Activated T-helper 1 cell treated with anti-CD3 and anti-CD28 coated beads, Interleukin-12 subunit alpha, Interleukin-12 subunit beta, Interleukin-2, Interleukin-4 antibody, amounts not matched to agents 30 ng/mL and 10 ng/mL and 1 ng/mL, durations not matched to agents 14 hours and 24 hours and 36 hours (primary cell): ENCODE measurements at regions of chr11 and their contacts with region 1.

Region 1: DNA sequence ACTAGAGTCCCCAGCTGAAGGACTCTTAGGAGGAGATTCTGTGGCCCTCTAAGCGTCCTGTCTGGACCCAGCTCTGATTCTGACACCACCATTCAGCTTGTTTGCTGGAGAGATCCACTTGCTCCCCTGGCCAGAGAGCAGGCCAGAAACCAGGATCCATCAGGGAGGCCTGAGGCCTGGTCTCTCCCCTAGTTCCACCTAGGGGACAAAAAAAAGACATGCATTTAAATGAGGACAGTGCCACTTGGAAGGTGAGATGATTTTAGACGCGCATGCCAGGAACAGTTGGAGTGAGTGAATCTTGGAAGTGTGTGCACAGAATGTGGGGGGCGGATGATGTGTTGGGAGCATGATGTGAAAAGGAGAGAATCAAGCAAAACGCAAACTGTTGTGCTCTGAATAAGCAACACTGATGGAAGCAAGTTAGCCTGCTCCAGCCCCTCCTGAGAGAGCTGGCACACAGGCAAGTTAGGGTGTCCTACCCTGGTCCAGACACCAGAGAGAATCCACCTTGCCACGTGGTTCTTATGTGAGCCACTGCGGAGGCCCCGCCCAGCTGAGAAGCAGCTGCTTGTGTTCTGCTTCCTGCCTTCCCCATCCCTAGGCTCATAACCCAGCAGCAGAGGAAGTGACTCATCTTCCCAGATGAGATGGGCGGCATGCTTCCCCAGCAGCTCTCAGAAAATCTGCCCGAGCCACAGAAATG is 8.0 kb upstream of the SLCO2B1 start:
- DNase-seq: peak; percentile 76
- H3K4me3 Mint-ChIP-seq: peak overlapping the region; percentile 63
- H3K27ac Mint-ChIP-seq: peak overlapping the region; percentile 88
- H3K4me1 Mint-ChIP-seq: peaks cover 63% of the 10 kb centered on the region
- H3K27me3 Mint-ChIP-seq: peaks cover 11% of the 10 kb centered on the region

Region 2: DNA sequence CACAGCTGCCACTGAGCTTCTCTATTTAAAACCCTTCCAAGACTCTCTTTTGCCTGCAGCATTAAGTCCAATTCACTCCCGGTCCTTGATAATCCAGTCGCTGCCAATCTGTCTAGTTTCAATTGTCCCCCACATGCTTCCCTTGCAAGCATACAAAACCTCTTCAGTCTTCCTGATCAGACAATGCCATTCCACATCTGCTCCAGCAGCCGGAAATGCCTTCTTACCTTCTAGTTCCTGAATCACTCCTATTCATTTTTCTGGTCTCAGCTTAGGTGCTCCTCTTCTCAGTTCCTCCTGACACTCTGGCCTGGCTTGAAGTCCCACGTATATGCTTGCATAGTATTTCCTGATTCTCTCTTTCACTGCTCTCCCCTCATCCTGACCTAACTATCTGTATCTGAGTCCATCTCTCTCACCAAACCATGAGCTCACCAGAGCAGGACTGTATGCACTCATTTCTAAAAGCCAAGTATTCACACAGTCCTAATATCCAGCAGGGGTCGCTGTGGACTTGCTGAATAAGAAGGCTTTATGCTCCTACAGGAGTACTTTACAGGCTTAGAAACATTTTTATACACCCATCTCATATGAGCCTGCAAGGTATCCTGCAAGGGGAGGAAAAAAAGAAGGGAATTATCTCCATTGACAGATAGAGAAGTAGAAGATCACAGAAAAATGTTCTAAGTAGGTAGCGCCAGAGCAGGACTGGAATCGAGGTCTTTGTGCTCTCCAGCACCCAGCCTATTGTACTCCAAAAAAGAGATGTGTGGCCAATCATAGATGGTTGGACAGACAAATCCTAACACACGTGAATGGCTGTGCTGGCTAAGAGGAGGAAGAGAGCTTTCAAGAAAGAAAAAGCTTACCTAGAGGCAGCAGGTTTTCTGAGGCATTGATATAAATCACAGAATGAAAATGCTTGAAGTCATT is 213.2 kb before region 1 on chr11:
- intact Hi-C with region 1: loop called (anchors 1 kb)
- DNase-seq: peak; percentile 49
- H3K4me3 Mint-ChIP-seq: no peak overlapping the region
- H3K27ac Mint-ChIP-seq: no peak overlapping the region
- H3K4me1 Mint-ChIP-seq: peaks cover 42% of the 10 kb centered on the region
- H3K27me3 Mint-ChIP-seq: no peaks in the 10 kb centered on the region

Region 3: DNA sequence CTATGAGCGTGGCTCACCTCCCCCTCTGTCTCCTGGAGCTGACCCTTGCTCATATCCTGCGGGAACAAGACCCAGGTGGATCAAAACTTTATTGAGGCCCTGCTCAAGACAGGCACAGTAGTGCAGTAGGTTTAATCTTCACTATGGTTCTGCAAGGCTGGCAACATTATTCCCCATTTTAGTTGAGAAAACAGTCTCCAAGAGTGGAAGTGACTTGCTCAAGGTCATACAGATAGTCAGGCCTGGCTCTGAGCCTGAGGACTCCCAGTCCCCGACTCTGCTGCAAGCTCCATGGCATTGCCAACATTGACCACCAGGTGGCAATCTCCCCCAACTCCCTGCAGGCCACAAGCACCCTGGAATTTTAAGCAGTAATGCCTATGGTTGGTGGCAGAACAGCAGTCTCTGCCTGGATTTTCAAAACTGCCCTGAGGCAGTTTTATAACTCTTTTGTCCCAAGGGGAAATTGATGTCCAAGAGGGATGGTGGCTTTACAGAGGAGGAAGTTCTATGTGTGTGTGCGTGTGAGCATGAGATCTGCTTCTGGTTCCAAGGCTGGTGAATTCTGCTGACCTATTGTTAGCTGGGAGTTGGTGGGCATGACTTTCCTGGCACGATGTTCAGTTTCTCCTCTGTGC is 120.0 kb before region 1 on chr11:
- intact Hi-C with region 1: loop called (anchors 2 kb)
- DNase-seq: peak; percentile 60
- H3K4me3 Mint-ChIP-seq: no peak overlapping the region
- H3K27ac Mint-ChIP-seq: no peak overlapping the region
- H3K4me1 Mint-ChIP-seq: no peaks in the 10 kb centered on the region
- H3K27me3 Mint-ChIP-seq: no peaks in the 10 kb centered on the region

Region 4: GRCh38 chr11:75204685-75205563 is 62.1 kb after region 1 on chr11:
- intact Hi-C with region 1: loop called (anchors 1 kb)
- DNase-seq: peak; percentile 76
- H3K4me3 Mint-ChIP-seq: no peak overlapping the region
- H3K27ac Mint-ChIP-seq: no peak overlapping the region
- H3K4me1 Mint-ChIP-seq: no peaks in the 10 kb centered on the region
- H3K27me3 Mint-ChIP-seq: peaks cover 6% of the 10 kb centered on the region

Region 5: GRCh38 chr11:75241036-75241905 is 98.4 kb after region 1 on chr11:
- intact Hi-C with region 1: loop called (anchors 1 kb)
- DNase-seq: peak; percentile 89
- H3K4me3 Mint-ChIP-seq: peak overlapping the region; percentile 58
- H3K27ac Mint-ChIP-seq: no peak overlapping the region
- H3K4me1 Mint-ChIP-seq: peaks cover 6% of the 10 kb centered on the region
- H3K27me3 Mint-ChIP-seq: peaks cover 52% of the 10 kb centered on the region

Region 6: DNA sequence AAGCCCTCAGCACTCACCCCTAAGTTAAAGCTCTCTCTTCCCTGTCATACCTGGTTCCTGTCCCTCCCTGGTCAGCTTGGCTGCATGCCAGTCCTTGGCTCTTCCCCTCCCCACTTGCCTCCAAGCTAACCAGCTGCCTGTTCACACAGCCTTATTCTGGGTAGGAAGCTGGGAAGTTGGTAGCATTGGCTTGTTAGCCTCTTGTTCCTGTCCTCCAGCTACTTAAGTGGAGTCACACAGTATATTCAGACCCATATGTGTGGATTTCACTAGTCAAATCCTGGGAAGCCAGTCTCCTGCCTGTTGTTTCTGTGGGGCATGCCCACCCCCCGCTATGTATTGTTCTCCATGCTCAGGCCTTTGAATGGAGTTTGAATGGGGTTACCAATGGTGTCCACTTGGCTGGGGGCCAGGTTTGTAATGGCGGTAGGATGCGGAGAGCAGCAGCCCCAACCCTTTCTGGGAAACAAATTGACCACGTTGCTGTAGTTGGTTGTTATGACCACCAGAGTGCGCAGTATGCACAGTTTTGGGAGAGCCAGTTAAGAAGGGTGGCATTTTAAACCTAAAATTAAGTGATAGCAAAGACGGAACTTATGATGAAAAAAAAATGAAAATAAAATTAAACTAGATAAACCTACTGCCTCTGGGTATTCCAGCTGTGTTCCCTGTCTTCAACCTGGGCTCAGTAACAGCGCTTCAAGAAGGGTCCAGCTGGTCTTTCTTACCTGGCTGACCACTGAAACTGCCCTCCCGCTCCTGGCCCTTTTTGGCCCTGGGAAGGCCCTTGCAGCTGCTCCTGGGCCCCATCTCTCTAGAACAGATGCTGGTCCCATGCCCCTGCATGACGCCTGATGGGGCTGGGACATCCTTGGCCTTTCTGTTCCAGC is 245.8 kb after region 1 on chr11:
- intact Hi-C with region 1: loop called (anchors 5 kb)
- DNase-seq: peak; percentile 64
- H3K4me3 Mint-ChIP-seq: no peak overlapping the region
- H3K27ac Mint-ChIP-seq: no peak overlapping the region
- H3K4me1 Mint-ChIP-seq: peaks cover 10% of the 10 kb centered on the region
- H3K27me3 Mint-ChIP-seq: peaks cover 25% of the 10 kb centered on the region

Region 7: GRCh38 chr11:75577207-75577606 is 434.3 kb after region 1 on chr11:
- intact Hi-C with region 1: no loop called
- DNase-seq: no peak
- H3K4me3 Mint-ChIP-seq: no peak overlapping the region
- H3K27ac Mint-ChIP-seq: no peak overlapping the region
- H3K4me1 Mint-ChIP-seq: peaks cover 1% of the 10 kb centered on the region
- H3K27me3 Mint-ChIP-seq: peaks cover 13% of the 10 kb centered on the region